ENCODE measurements at regions of chr20 and their contacts with region 1.

Region 1: DNA sequence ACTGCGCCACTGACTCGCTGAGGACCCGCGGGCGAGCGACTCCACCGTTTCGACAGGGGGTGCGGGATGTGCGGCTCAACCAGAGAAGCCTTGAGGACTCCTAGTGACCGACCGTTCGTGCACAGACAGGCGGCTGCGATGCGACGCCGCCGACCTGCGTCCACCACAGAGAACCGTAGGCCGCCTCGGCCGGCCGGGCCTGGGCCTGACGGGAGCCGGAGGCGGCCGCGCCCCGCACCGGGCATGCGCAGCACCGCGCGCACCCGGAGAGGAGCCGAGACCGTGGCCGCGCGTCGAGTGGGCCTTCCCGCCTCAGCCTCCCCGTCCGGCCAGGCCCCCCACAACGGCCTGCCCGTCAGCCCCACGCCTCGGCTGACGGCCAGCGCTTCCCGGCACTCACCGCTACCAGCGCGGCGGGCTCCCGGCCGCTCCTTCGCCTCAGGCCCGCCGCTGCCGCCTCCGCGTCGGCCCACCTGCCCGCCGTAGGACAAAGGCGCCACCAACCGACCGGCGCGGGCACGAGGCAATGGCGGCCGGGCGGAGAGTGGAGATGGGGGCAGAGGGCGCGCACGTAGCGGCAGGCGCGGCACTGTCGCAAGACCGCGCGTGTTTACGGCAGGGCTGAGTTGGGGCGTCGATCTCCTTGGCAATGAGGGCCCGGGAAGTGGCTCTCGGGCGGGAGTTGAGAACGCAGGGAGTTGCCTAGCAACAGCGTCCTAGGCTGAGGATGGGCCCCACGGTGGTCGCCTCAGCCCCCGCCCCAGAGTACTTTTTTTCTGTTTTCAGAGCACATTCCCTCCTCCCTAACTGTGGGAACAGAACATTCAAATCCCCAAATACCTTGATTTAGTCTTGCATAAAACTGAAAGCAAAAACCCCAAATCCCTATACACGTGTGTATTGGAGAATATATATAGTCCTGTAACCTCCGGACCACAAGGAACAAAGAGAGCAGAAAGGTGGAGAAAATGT is at the start of gene NCOA5:
- DNase-seq: peak; percentile 93
- H3K4me3 Mint-ChIP-seq: peak within 1 kb of the TSS; percentile 91
- H3K27ac Mint-ChIP-seq: peak within 1 kb of the TSS; percentile 87
- H3K4me1 Mint-ChIP-seq: peaks cover 28% of the 10 kb centered on the region
- H3K27me3 Mint-ChIP-seq: peaks cover 1% of the 10 kb centered on the region
- total RNA-seq, gene NCOA5: 27.5 and 28.7 TPM in 2 replicates

Region 2: DNA sequence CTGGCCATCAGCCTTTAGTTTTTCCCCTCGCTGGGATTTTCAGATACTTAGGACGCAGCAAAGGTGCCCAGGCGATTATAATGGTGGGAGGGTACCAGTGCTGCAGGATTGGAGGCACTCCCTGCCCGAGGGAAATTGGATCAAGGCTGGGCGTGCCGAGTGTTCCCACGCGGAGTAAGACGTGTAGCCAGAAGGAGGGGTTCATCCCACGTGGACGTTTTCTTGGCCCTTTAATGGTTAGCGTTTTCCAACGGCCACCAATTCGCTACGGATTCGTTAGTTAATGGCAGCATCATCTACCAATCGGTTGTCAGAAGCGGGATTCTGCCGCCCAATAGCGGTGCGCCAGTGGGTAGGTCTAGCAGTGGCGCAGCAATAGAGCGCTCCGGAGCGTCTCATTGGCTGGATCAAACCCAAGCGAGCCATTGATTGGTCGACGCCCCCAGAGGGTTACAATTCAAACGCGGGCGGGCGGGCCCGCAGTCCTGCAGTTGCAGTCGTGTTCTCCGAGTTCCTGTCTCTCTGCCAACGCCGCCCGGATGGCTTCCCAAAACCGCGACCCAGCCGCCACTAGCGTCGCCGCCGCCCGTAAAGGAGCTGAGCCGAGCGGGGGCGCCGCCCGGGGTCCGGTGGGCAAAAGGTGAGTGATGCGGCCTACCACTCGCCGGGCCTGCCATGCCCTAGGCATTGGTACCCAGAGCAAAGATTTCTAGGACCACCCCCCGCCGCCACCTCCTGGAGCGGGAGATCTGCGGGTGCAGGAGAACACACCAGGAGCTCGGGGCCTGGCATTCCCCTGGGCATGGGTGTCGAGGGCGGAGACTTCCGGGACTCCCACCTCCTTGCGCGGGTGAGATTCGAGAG is 277.3 kb before region 1 on chr20 and contains the start of gene UBE2C:
- intact Hi-C with region 1: loop called (anchors 1 kb)
- DNase-seq: peak; percentile 96
- H3K4me3 Mint-ChIP-seq: peak within 1 kb of the TSS; percentile 90
- H3K27ac Mint-ChIP-seq: peak within 1 kb of the TSS; percentile 80
- H3K4me1 Mint-ChIP-seq: peaks cover 24% of the 10 kb centered on the region
- H3K27me3 Mint-ChIP-seq: no peaks in the 10 kb centered on the region
- total RNA-seq, gene UBE2C: 142 and 145 TPM in 2 replicates

Region 3: GRCh38 chr20:46157625-46158024 is 67.9 kb after region 1 on chr20:
- intact Hi-C with region 1: no loop called
- DNase-seq: no peak
- H3K4me3 Mint-ChIP-seq: no peak overlapping the region
- H3K27ac Mint-ChIP-seq: no peak overlapping the region
- H3K4me1 Mint-ChIP-seq: no peaks in the 10 kb centered on the region
- H3K27me3 Mint-ChIP-seq: peaks cover 5% of the 10 kb centered on the region

Region 4: DNA sequence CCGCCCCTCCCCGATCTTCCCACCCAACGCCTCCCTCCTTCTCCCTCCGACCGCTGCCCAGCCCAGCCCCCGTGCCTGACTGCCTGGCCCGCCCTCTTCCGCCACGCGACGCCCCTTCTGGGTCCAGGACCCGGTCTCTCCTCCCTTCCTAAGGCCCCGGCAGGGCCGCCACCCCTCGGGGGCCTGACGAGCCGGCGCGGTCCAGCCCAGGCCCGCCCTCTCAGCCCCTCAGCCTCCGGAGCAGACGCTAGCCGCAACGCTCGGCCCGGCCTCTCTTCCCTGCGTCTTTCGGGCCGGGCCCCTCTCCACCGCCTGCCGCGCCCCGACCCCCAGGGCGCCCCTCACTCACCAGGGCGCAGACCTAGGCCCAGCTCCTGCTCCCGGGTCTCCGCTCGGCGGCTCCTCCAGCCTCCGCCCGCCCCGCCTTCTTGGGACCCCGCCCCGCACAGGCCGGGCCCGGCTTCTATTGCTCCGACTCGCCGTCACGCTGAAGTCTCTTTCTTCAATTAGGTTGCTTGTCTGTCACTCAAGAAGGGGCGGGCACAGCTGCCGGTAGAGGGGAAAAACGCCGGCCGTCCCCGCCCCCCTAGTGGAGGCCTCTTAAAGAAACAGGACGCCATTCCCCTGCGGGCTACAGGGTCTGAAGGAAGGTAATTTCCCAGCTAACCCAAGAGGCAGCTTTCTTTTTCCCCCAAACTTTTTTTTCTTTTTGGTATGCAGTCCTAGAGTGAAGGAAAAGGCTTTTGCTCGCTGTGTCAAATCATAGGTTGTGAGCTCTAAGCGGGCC is 316.7 kb after region 1 on chr20 and contains the start of gene ELMO2:
- intact Hi-C with region 1: loop called (anchors 2 kb)
- DNase-seq: peak; percentile 93
- H3K4me3 Mint-ChIP-seq: peak within 1 kb of the TSS; percentile 83
- H3K27ac Mint-ChIP-seq: peak within 1 kb of the TSS; percentile 86
- H3K4me1 Mint-ChIP-seq: peaks cover 64% of the 10 kb centered on the region
- H3K27me3 Mint-ChIP-seq: peaks cover 5% of the 10 kb centered on the region
- total RNA-seq, gene ELMO2: 59.1 and 63.2 TPM in 2 replicates